Naive thymus-derived CD4-positive, alpha-beta T cell (primary cell): ENCODE measurements at regions of chr12 and their contacts with region 1.

Region 1: GRCh38 chr12:4538207-4539160 is at the start of gene RAD51AP1:
- DNase-seq: peak; percentile 87 to 98 (median 95)
- ATAC-seq: peak; percentile 100
- H3K4me3 ChIP-seq: peak within 1 kb of the TSS; percentile 90
- H3K4me3 Mint-ChIP-seq: peak within 1 kb of the TSS; percentile 91 to 99 (median 96)
- H3K27ac ChIP-seq: peak within 1 kb of the TSS; percentile 84
- H3K27ac Mint-ChIP-seq: peak within 1 kb of the TSS; percentile 96 to 99 (median 98)
- H3K4me1 ChIP-seq: peaks cover 11 to 13% of the 10 kb centered on the region in 2 donors
- H3K4me1 Mint-ChIP-seq: peaks cover 6 to 40% (median 32%) of the 10 kb centered on the region in 7 donors
- H3K27me3 ChIP-seq: no peaks in the 10 kb centered on the region
- H3K27me3 Mint-ChIP-seq: no peaks in the 10 kb centered on the region
- total RNA-seq, gene RAD51AP1: 0.13 to 37.6 (median 1.7) TPM

Region 2: GRCh38 chr12:2794736-2795289 is 1743.7 kb before region 1 on chr12 and contains the start of gene FKBP4:
- CTCF ChIA-PET with region 1: no interaction called
- POLR2A ChIA-PET with region 1: no interaction called
- intact Hi-C with region 1: loop called in 1 of 2 experiments (anchors 10 kb)
- DNase-seq: peak; percentile 77 to 92 (median 86)
- ATAC-seq: peak; percentile 95
- H3K4me3 ChIP-seq: peak within 1 kb of the TSS; percentile 95
- H3K4me3 Mint-ChIP-seq: peak within 1 kb of the TSS; percentile 88 to 97 (median 94)
- H3K27ac ChIP-seq: peak within 1 kb of the TSS; percentile 73
- H3K27ac Mint-ChIP-seq: peak within 1 kb of the TSS; percentile 48 to 93 (median 84)
- H3K4me1 ChIP-seq: peaks cover 8 to 11% of the 10 kb centered on the region in 2 donors
- H3K4me1 Mint-ChIP-seq: peaks cover 17 to 37% (median 31%) of the 10 kb centered on the region in 7 donors
- H3K27me3 ChIP-seq: no peaks in the 10 kb centered on the region
- H3K27me3 Mint-ChIP-seq: peaks cover 0 to 21% (median 0%) of the 10 kb centered on the region in 5 donors
- total RNA-seq, gene FKBP4: 47.4 to 95.4 (median 54.6) TPM

Region 3: DNA sequence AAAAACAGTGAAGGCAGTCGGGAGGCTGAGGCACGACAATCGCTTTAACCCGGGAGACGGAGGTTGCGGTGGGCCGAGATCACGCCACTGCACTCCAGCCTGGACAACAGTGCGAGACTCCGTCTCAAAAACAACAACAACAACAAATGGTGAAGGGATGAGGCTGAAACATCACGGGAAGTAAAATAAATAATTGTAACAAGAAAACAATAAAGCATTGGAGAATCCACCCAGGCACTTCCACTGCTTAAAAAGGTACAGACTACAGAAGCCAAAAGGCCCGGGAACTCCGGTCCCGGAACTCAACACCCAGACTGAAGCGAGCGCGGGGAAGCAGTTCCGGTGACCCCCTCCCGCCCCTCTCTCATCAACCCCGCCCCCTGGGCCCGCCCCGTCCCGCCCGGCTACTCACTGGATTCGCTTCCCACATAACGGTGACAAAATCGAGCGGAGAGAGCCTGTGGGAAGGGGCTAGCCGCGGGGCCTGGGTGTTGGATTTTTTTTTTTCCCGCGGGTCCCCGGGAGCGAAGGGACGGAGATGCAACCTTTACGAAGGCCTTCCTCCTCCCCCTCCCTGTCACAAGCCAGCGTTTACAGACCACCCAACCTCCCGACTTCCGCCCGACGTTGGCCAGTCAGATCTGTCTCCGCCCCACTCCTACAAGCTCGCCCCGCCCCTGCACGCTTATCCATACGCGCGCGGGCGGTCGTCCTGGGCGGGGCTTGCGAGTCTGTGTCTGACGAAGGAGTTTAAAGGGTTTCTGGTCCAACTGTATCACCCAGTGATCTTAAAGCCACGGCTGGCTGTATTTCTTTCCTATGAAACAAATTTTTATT is 665.5 kb before region 1 on chr12 and contains the start of gene PARP11:
- CTCF ChIA-PET with region 1: no interaction called
- POLR2A ChIA-PET with region 1: no interaction called
- intact Hi-C with region 1: loop called (anchors 1 kb)
- DNase-seq: peak; percentile 93 to 98 (median 96)
- ATAC-seq: peak; percentile 98
- H3K4me3 ChIP-seq: peak within 1 kb of the TSS; percentile 93
- H3K4me3 Mint-ChIP-seq: peak within 1 kb of the TSS; percentile 90 to 99 (median 94)
- H3K27ac ChIP-seq: peak within 1 kb of the TSS; percentile 96
- H3K27ac Mint-ChIP-seq: peak within 1 kb of the TSS; percentile 95 to 99 (median 98)
- H3K4me1 ChIP-seq: peaks cover 23 to 32% of the 10 kb centered on the region in 2 donors
- H3K4me1 Mint-ChIP-seq: peaks cover 31 to 58% (median 55%) of the 10 kb centered on the region in 7 donors
- H3K27me3 ChIP-seq: no peaks in the 10 kb centered on the region
- H3K27me3 Mint-ChIP-seq: peaks cover 0 to 6% (median 0%) of the 10 kb centered on the region in 5 donors
- total RNA-seq, gene PARP11: 21.5 to 37.4 (median 35.1) TPM

Region 4: DNA sequence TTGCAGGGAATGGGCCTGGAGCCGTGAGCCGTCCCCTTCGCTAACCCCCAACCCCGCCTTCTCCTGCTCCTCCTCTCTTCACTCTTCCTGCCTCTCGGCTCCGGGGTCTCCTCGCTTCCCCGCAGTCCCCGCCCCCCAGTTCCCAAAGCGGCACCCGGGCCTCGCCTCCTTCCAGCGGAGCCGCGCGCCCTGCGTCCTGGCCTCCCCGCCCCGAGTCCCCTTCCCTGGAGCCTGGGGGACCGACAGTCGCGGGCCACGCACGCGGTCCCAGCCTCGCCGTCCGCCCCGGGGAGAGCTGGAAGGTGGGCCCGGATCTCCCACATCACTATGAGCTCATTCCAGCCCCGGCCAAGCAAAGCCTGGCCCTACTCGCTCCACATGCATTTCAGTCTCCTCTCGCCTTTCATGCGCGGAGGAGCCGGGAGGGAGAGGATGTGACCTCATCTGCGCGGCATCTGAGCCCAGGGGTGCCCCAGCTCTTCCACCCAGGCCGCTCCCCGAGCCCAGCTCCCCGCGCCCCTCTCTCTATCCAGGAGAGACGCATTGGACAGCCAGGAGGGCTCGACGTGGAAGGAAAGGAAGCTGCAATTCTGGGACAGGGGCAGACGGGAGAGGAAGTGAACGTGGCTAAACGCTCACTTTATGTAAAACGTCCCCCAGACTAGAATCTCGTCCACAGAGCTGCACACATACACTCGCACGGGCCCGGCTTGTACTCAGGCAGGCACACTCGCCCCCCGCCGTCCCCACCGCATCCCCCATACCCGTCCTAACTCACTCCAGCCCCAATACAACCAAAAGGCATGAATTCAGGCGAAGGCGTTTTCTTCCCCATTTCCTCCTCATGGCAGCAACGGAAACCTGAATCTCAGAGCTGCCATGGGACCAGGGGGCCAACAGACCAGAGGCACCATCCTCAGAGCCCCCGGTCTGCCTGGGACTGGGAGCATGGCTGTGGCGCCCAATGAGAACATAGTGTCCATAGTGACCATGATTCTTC is 373.6 kb before region 1 on chr12:
- CTCF ChIA-PET with region 1: no interaction called
- POLR2A ChIA-PET with region 1: no interaction called
- intact Hi-C with region 1: loop called in 1 of 2 experiments (anchors 5 kb)
- DNase-seq: peak; percentile 43 to 65 (median 58)
- ATAC-seq: peak; percentile 93
- H3K4me3 ChIP-seq: peak overlapping the region; percentile 64
- H3K4me3 Mint-ChIP-seq: peak overlapping the region; percentile 82 to 94 (median 88)
- H3K27ac ChIP-seq: peak overlapping the region; percentile 71
- H3K27ac Mint-ChIP-seq: peak overlapping the region; percentile 82 to 98 (median 88)
- H3K4me1 ChIP-seq: peaks cover 4 to 6% of the 10 kb centered on the region in 2 donors
- H3K4me1 Mint-ChIP-seq: peaks cover 13 to 61% (median 20%) of the 10 kb centered on the region in 7 donors
- H3K27me3 ChIP-seq: no peaks in the 10 kb centered on the region
- H3K27me3 Mint-ChIP-seq: no peaks in the 10 kb centered on the region

Region 5: GRCh38 chr12:4320853-4321701 is 217.4 kb before region 1 on chr12 and contains the start of gene TIGAR:
- CTCF ChIA-PET with region 1: no interaction called
- POLR2A ChIA-PET with region 1: no interaction called
- intact Hi-C with region 1: loop called (anchors 1 to 2 kb)
- DNase-seq: peak; percentile 86 to 97 (median 90)
- ATAC-seq: peak; percentile 99
- H3K4me3 ChIP-seq: peak within 1 kb of the TSS; percentile 85
- H3K4me3 Mint-ChIP-seq: peak within 1 kb of the TSS; percentile 83 to 97 (median 95)
- H3K27ac ChIP-seq: peak within 1 kb of the TSS; percentile 84
- H3K27ac Mint-ChIP-seq: peak within 1 kb of the TSS; percentile 74 to 96 (median 92)
- H3K4me1 ChIP-seq: peaks cover 14 to 15% of the 10 kb centered on the region in 2 donors
- H3K4me1 Mint-ChIP-seq: peaks cover 21 to 53% (median 46%) of the 10 kb centered on the region in 7 donors
- H3K27me3 ChIP-seq: no peaks in the 10 kb centered on the region
- H3K27me3 Mint-ChIP-seq: no peaks in the 10 kb centered on the region
- total RNA-seq, gene TIGAR: 7.1 to 15.8 (median 11.1) TPM

Region 6: GRCh38 chr12:4518106-4518728 is 20.3 kb before region 1 on chr12:
- CTCF ChIA-PET with region 1: no interaction called
- POLR2A ChIA-PET with region 1: no interaction called
- intact Hi-C with region 1: no loop called
- DNase-seq: no peak
- ATAC-seq: no peak
- H3K4me3 ChIP-seq: no peak overlapping the region
- H3K4me3 Mint-ChIP-seq: no peak overlapping the region
- H3K27ac ChIP-seq: no peak overlapping the region
- H3K27ac Mint-ChIP-seq: peak overlapping the region in 3 of 9 donors; percentile 41 to 52 (median 45)
- H3K4me1 ChIP-seq: no peaks in the 10 kb centered on the region
- H3K4me1 Mint-ChIP-seq: peaks cover 0 to 1% (median 0%) of the 10 kb centered on the region in 7 donors
- H3K27me3 ChIP-seq: no peaks in the 10 kb centered on the region
- H3K27me3 Mint-ChIP-seq: no peaks in the 10 kb centered on the region

Region 7: GRCh38 chr12:4604684-4605193 is 66.3 kb after region 1 on chr12:
- CTCF ChIA-PET with region 1: no interaction called
- POLR2A ChIA-PET with region 1: no interaction called
- intact Hi-C with region 1: loop called in 1 of 2 experiments (anchors 1 kb)
- DNase-seq: peak; percentile 63 to 82 (median 76)
- ATAC-seq: peak; percentile 99
- H3K4me3 ChIP-seq: peak overlapping the region; percentile 92
- H3K4me3 Mint-ChIP-seq: peak overlapping the region; percentile 83 to 99 (median 98)
- H3K27ac ChIP-seq: peak overlapping the region; percentile 67
- H3K27ac Mint-ChIP-seq: peak overlapping the region; percentile 83 to 97 (median 90)
- H3K4me1 ChIP-seq: peaks cover 7 to 10% of the 10 kb centered on the region in 2 donors
- H3K4me1 Mint-ChIP-seq: peaks cover 16 to 48% (median 35%) of the 10 kb centered on the region in 7 donors
- H3K27me3 ChIP-seq: no peaks in the 10 kb centered on the region
- H3K27me3 Mint-ChIP-seq: peaks cover 0 to 19% (median 7%) of the 10 kb centered on the region in 5 donors